ENCODE measurements at regions of chr1 and their contacts with region 1.

Region 1: GRCh38 chr1:26279456-26280332 is at the start of gene SH3BGRL3:
- DNase-seq: peak; percentile 97
- H3K4me3 Mint-ChIP-seq: peak within 1 kb of the TSS; percentile 96
- H3K27ac Mint-ChIP-seq: peak within 1 kb of the TSS; percentile 97
- H3K4me1 Mint-ChIP-seq: peaks cover 74% of the 10 kb centered on the region
- H3K27me3 Mint-ChIP-seq: no peaks in the 10 kb centered on the region
- total RNA-seq, gene SH3BGRL3: 463 and 474 TPM in 2 replicates

Region 2: GRCh38 chr1:26306290-26307229 is 26.9 kb after region 1 on chr1 and contains the start of gene UBXN11:
- intact Hi-C with region 1: loop called (anchors 1 kb)
- DNase-seq: peak; percentile 98
- H3K4me3 Mint-ChIP-seq: peak within 1 kb of the TSS; percentile 98
- H3K27ac Mint-ChIP-seq: peak within 1 kb of the TSS; percentile 93
- H3K4me1 Mint-ChIP-seq: peaks cover 30% of the 10 kb centered on the region
- H3K27me3 Mint-ChIP-seq: no peaks in the 10 kb centered on the region
- total RNA-seq, gene UBXN11: 17.1 and 19.0 TPM in 2 replicates

Region 3: DNA sequence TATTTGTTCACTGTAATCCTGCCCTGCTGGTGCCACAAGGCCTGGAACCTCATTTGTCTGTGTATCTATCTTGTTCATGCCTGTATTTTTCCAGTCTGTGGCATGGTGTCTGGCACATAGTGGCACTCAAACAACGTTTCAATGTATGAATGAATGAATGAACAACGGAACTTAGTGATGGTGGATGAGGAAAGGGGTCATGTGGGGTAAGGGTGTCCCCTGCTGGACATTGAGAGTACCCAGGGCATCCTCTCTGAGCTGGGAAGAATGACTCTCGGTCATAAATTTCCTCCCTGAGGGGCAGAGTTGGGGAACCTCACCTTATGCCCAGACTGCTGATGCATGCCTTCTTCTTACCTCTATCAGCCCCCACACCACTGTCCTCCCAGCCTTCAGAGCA is 111.8 kb after region 1 on chr1:
- intact Hi-C with region 1: loop called (anchors 1 kb)
- DNase-seq: peak; percentile 86
- H3K4me3 Mint-ChIP-seq: no peak overlapping the region
- H3K27ac Mint-ChIP-seq: no peak overlapping the region
- H3K4me1 Mint-ChIP-seq: peaks cover 41% of the 10 kb centered on the region
- H3K27me3 Mint-ChIP-seq: peaks cover 4% of the 10 kb centered on the region

Region 4: DNA sequence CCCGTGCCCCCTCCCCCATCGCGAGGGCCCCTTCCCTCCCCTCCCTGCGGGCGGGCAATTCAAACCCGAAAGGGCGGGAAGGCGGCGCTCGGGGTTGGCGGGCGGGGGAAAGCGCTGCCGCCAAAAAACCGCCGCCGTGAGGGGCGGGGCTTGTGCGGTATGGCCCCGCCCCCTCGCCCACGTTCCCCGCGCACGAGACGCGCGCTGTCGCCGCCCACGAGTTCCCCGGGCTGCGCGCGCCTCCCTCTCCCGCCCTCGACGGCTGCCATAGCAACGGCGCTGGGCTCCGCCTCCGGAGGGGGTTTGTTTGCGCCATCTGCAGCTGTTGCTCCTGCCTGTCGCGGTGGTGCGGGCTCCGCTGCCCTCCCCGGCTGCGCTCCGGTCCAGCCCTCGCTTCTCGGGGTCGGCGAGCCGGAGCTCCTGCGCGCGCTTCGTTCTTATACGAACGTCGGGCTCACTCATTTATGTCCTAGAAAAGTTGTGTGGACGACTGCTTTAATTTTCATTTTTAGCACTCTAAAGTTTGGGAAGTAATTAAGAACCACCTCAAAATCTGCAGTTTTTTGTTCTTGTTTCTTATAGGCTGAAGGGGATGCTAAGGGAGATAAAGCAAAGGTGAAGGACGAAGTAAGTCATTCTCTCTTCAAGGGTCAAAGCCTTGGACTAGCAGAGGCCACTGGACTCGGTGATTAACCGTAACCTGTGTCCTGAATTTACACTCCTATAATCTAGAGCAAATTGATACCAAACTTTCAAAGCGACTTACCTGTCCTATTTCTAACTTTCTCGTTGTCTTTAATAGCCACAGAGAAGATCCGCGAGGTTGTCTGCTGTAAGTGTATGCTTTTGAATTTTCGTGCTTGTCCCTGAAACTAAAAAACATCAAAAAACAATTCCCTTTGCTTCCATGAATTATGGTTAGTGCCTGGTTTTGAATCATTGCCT is 193.5 kb after region 1 on chr1:
- intact Hi-C with region 1: loop called (anchors 5 kb)
- DNase-seq: peak; percentile 99
- H3K4me3 Mint-ChIP-seq: peak overlapping the region; percentile 94
- H3K27ac Mint-ChIP-seq: peak overlapping the region; percentile 84
- H3K4me1 Mint-ChIP-seq: peaks cover 48% of the 10 kb centered on the region
- H3K27me3 Mint-ChIP-seq: peaks cover 2% of the 10 kb centered on the region